ENCODE measurements at regions of chr2 and their contacts with region 1.

Region 1: DNA sequence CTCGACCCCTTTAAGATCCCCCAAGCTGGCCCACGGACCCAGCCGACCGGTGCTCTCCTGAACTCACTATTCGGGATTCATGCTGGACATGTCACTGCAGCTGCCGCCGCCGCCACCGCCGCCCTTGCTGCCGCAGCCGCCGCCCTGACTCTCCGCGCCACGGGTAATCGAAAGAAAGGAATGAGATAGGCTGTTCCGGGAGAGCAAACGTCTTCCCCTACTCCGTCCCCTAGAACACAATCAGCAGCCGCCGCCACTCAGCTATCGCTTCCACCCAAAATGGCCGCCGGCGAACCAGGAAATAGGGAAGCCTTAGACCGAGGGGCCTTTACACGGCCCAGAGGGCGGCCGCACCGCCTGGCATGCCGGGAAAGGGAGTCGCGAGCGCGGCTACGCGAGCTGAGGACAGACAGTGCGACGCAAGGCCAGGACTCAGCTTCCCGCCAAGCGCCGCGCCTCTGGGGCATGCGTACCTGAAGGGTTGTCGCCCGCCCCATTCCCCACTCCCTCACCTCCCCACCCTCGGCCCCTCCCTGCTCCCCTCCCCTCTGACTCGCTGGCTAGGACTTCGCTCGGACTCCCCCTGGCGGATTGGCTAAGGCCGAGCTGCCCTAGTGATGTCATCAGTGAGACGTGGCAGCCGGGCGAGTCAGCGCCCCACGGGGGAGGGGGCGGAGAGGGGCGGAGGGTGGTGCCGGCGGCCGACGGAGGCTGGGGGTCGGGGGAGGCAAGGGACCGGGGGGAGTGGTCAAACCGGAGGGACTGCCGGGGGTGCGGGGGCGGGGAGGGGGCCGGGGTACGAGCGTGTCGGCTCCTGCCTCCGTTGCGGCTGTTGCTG is at the start of gene RAB1A:
- DNase-seq: peak; percentile 100
- H3K4me3 ChIP-seq: peak within 1 kb of the TSS; percentile 93
- H3K27ac ChIP-seq: peak within 1 kb of the TSS; percentile 58
- H3K4me1 ChIP-seq: peaks cover 28% of the 10 kb centered on the region
- CTCF ChIP-seq: peak; percentile 35
- total RNA-seq, gene RAB1A: 37.3 and 39.7 TPM in 2 replicates

Region 2: GRCh38 chr2:64474121-64474571 is 655.9 kb before region 1 on chr2:
- CTCF ChIA-PET with region 1: no interaction called
- POLR2A ChIA-PET with region 1: no interaction called
- intact Hi-C with region 1: no loop called
- DNase-seq: peak; percentile 76
- H3K4me3 ChIP-seq: no peak overlapping the region
- H3K27ac ChIP-seq: peak overlapping the region; percentile 22
- H3K4me1 ChIP-seq: peaks cover 14% of the 10 kb centered on the region
- CTCF ChIP-seq: no peak

Region 3: GRCh38 chr2:64782051-64782390 is 348.0 kb before region 1 on chr2:
- CTCF ChIA-PET with region 1: no interaction called
- POLR2A ChIA-PET with region 1: no interaction called
- intact Hi-C with region 1: no loop called
- DNase-seq: no peak
- H3K4me3 ChIP-seq: no peak overlapping the region
- H3K27ac ChIP-seq: no peak overlapping the region
- H3K4me1 ChIP-seq: peaks cover 8% of the 10 kb centered on the region
- CTCF ChIP-seq: no peak

Region 4: GRCh38 chr2:65056215-65057053 is 73.6 kb before region 1 on chr2 and contains the start of gene CEP68:
- CTCF ChIA-PET with region 1: no interaction called
- POLR2A ChIA-PET with region 1: interaction called, 12 read pairs
- intact Hi-C with region 1: no loop called
- DNase-seq: peak; percentile 99
- H3K4me3 ChIP-seq: peak within 1 kb of the TSS; percentile 82
- H3K27ac ChIP-seq: peak within 1 kb of the TSS; percentile 56
- H3K4me1 ChIP-seq: peaks cover 68% of the 10 kb centered on the region
- CTCF ChIP-seq: no peak
- total RNA-seq, gene CEP68: 7.3 and 8.7 TPM in 2 replicates

Region 5: GRCh38 chr2:65064728-65065552 is 65.1 kb before region 1 on chr2:
- CTCF ChIA-PET with region 1: interaction called, 6 read pairs
- POLR2A ChIA-PET with region 1: interaction called, 7 read pairs
- intact Hi-C with region 1: loop called (anchors 1 kb)
- DNase-seq: peak; percentile 88
- H3K4me3 ChIP-seq: peak overlapping the region; percentile 43
- H3K27ac ChIP-seq: peak overlapping the region; percentile 67
- H3K4me1 ChIP-seq: peaks cover 46% of the 10 kb centered on the region
- CTCF ChIP-seq: peak; percentile 89

Region 6: DNA sequence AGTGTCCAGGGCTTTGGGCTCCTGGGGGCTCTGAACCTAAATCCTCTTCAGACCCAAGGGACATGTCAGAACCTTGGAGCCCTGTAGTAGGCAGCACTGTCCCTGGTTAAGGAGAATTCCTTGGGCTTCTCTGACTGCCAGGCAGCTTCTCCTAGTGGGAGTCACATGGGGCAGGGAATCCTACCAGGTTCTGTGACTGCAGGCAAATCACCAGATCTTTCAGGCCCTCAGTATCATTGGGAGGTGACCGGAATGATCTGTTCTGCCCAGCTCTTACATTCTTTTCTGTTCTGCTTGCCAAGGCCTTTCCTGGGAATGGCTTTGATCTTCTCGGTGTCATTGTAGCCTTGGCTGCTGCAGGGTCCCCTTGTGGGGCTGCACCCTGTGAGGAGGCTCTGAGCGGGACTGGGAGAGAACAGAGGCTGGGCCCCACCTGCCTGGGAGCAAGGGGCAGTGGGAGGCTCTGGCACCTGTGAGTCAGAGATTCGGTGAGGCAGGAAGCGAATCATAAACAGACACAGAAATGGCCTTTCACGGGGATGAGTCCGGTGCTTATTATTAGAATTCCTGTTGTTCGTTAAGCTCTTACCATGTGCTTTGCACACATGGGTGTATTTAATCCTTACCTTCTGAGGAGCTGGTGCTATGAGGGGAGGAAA is 59.7 kb before region 1 on chr2:
- CTCF ChIA-PET with region 1: interaction called, 6 read pairs
- POLR2A ChIA-PET with region 1: interaction called, 18 read pairs
- intact Hi-C with region 1: loop called (anchors 1 kb)
- DNase-seq: peak; percentile 76
- H3K4me3 ChIP-seq: peak overlapping the region; percentile 15
- H3K27ac ChIP-seq: peak overlapping the region; percentile 83
- H3K4me1 ChIP-seq: peaks cover 78% of the 10 kb centered on the region
- CTCF ChIP-seq: 0 out of 2 replicates have a peak, but pooled peaks have one; percentile 28

Region 7: DNA sequence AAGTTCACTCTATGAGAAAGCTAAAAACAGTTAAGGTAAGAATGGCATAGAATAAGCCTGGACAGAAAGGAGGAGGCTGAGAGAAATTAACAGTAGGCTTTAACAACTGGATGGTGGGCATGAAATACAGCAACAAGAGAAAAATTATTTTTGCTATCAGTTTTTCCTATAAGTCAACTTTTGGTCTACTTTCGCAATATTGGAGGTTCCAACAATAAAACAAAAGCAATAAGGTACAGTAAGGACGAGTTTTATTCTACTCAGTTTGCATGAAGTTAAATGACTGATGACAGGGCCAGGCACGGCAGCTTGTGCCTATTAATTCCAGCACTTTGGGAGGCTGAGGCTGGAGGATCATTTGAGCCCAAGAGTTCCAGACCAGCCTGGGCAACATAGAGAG is 17.4 kb before region 1 on chr2:
- CTCF ChIA-PET with region 1: no interaction called
- POLR2A ChIA-PET with region 1: interaction called, 20 read pairs
- intact Hi-C with region 1: no loop called
- DNase-seq: no peak
- H3K4me3 ChIP-seq: no peak overlapping the region
- H3K27ac ChIP-seq: no peak overlapping the region
- H3K4me1 ChIP-seq: peaks cover 37% of the 10 kb centered on the region
- CTCF ChIP-seq: no peak

Region 8: GRCh38 chr2:65164426-65164891 is 34.4 kb after region 1 on chr2:
- CTCF ChIA-PET with region 1: interaction called, 4 read pairs
- POLR2A ChIA-PET with region 1: interaction called, 12 read pairs
- intact Hi-C with region 1: loop called (anchors 2 kb)
- DNase-seq: no peak
- H3K4me3 ChIP-seq: no peak overlapping the region
- H3K27ac ChIP-seq: peak overlapping the region; percentile 22
- H3K4me1 ChIP-seq: peaks cover 71% of the 10 kb centered on the region
- CTCF ChIP-seq: no peak